ENCODE measurements at regions of chr1 and their contacts with region 1.

Region 1: GRCh38 chr1:186482661-186483255 is 21.8 kb upstream of the PDC start:
- DNase-seq: peak; percentile 82
- H3K4me3 Mint-ChIP-seq: no peak overlapping the region
- H3K27ac Mint-ChIP-seq: no peak overlapping the region
- H3K4me1 Mint-ChIP-seq: no peaks in the 10 kb centered on the region
- H3K27me3 Mint-ChIP-seq: peaks cover 20% of the 10 kb centered on the region

Region 2: DNA sequence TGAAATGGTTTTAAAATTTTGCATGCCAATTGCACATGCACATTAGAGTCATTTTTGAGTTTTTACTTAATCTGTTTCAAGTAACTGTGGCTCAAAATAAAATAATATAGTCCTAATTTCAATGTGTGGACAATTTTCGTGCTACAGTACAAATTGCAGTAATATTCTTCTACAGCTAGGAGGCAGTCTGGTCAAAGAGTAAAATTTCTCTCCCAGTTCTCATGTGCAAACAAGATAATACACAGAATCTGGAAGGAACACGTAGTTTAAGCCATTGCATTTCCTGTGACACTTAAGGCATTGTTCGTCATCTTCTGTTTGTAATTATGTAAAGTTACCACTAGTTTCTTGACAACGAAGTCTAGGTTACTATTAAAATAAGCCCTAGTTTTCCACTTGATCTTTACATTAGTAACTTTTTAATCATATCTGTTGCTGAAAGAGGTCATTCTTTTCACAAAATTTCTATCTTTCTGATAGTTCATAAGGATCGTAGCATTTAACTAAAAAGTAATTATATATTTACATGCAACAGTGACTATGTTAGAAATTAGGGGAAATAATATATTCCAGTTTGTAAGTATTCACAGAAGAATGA is 78.2 kb before region 1 on chr1:
- intact Hi-C with region 1: loop called (anchors 2 kb)
- DNase-seq: peak; percentile 74
- H3K4me3 Mint-ChIP-seq: no peak overlapping the region
- H3K27ac Mint-ChIP-seq: no peak overlapping the region
- H3K4me1 Mint-ChIP-seq: peaks cover 9% of the 10 kb centered on the region
- H3K27me3 Mint-ChIP-seq: no peaks in the 10 kb centered on the region

Region 3: DNA sequence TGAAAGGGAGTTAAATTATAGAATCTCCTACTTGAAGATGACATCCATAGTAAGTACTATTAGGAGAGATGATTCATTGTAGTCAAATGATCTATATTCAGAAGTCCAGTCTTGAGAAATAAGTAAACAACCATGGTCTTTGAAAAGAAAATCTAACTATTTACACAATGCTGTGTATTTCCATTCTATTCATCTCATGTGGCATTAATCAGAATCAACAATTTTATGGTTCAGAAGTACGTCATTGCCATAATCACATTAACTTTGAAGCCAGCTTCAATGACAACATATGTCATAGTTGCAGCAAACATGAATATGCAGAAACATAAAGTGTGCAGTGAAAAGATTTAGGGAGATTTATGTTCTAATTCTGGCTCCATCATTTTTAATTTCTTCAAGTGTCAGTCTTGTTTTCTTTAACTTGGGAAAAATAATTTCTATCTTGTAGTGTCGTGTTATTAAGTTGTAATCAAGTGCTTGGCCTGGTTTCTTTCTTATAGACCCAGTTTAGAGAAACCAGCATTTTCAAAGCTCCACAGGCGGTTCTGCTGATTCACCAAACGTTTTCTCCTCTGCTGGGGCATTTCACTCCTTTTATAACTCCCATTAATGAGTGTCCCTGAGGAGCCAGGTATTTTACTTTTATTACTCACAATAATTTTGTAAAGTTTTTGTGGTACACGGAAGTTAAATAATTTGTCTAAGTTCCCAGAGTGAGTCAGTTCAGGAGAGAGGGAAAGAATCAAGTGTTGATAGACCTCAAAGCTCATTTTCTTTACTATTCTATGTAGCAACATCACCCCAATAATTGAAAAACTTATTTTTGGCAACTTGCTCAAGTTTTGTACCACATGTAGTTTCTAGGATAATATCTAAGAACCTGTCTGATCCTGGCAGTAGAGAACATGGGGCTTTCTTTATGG is 233.4 kb after region 1 on chr1:
- intact Hi-C with region 1: no loop called
- DNase-seq: no peak
- H3K4me3 Mint-ChIP-seq: no peak overlapping the region
- H3K27ac Mint-ChIP-seq: no peak overlapping the region
- H3K4me1 Mint-ChIP-seq: no peaks in the 10 kb centered on the region
- H3K27me3 Mint-ChIP-seq: peaks cover 20% of the 10 kb centered on the region

Measured in activated CD4-positive, alpha-beta T cell treated with anti-CD3 and anti-CD28 coated beads, Interleukin-2, amount 10 ng/mL, durations not matched to agents 24 days and 14 days (primary cell).